K562 (cell line): ENCODE measurements at regions of chr2 and their contacts with region 1.

Region 1: GRCh38 chr2:70142590-70143313 is 48.1 kb downstream of the C2orf42 start:
- DNase-seq: peak; percentile 97 to 100 (median 98)
- ATAC-seq: peak; percentile 77
- H3K4me3 ChIP-seq: peak overlapping the region; percentile 28
- H3K27ac ChIP-seq: peak overlapping the region; percentile 97
- H3K4me1 ChIP-seq: peaks cover 54 to 59% of the 10 kb centered on the region in 2 experiments
- H3K27me3 ChIP-seq: no peaks in the 10 kb centered on the region
- CTCF ChIP-seq: peak; percentile 93 to 98 (median 95)
- EP300 ChIP-seq: peak; percentile 60
- POLR2A ChIP-seq: peak; percentile 85
- RAD21 ChIP-seq: peak; percentile 99 to 100

Region 2: DNA sequence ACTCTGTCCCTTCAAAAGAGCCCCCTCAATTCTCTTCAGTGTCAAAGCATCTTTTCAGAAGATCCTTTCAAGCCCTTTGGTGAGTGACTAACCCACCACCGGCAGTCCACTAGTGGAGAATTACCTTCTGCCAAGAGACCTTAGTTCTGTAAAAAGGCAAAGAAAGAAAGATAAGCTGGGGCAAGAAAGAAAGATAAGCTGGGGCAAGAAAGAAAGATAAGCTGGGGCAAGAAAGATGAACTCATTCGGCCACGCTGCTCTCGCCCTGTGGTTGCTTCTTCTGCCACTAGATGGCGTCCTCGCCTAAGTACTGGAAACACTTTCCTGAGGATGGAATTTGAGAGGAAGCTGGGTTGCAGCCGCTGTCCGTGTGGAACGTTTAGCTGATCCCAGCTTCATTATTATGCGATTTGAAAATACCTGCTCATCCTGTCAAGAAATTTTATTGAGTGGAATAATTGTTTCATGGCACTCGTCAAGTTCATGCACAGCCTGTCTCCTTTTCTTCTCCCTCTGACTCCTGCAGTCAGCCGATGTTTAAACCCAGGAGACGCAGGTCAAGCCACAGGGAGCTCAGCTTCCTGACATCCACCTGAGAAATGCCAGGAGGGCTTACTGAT is 418.1 kb before region 1 on chr2:
- CTCF ChIA-PET with region 1: no interaction called
- POLR2A ChIA-PET with region 1: interaction called, 5 read pairs
- in situ Hi-C with region 1: loop called (anchors 10 kb)
- intact Hi-C with region 1: loop called (anchors 2 kb)
- DNase-seq: peak; percentile 68 to 91 (median 73)
- ATAC-seq: peak; percentile 98
- H3K4me3 ChIP-seq: no peak overlapping the region
- H3K27ac ChIP-seq: no peak overlapping the region
- H3K4me1 ChIP-seq: peaks cover 6 to 7% of the 10 kb centered on the region in 2 experiments; a peak in 3 of 5 replicates
- H3K27me3 ChIP-seq: no peaks in the 10 kb centered on the region; a peak in 1 of 5 replicates
- CTCF ChIP-seq: peak; percentile 84 to 93 (median 93)
- EP300 ChIP-seq: peak; percentile 60
- POLR2A ChIP-seq: no peak
- RAD21 ChIP-seq: peak; percentile 97 to 99

Region 3: GRCh38 chr2:69933839-69934613 is 208.7 kb before region 1 on chr2:
- CTCF ChIA-PET with region 1: no interaction called
- POLR2A ChIA-PET with region 1: interaction called, 5 read pairs
- in situ Hi-C with region 1: loop called (anchors 5 kb)
- intact Hi-C with region 1: loop called (anchors 5 kb)
- DNase-seq: peak; percentile 35 to 75 (median 60)
- ATAC-seq: peak; percentile 87
- H3K4me3 ChIP-seq: no peak overlapping the region
- H3K27ac ChIP-seq: peak overlapping the region; percentile 71
- H3K4me1 ChIP-seq: peaks cover 4 to 26% of the 10 kb centered on the region in 2 experiments; a peak in 3 of 5 replicates
- H3K27me3 ChIP-seq: no peaks in the 10 kb centered on the region
- CTCF ChIP-seq: no peak
- EP300 ChIP-seq: peak; percentile 78
- POLR2A ChIP-seq: no peak
- RAD21 ChIP-seq: peak; percentile 27 to 29; a peak in 3 of 4 replicates

Region 4: DNA sequence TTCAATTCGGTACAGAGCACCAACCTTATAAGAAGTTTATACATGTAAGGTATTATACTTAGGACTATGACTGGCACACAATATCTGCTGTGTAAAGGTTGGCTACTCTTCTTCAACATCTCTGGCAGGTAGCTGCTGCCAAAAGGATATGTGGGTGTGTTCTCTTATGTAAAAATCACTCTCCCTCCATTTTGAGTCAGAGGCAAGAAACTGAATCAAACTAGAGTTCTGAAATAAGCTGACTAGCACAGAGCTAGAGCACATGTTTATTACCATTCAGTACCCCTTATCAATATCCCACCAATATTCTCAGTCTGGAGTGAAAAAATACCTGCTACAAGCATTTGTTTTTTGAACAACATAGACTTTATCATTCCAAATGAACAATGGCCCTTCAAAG is 93.5 kb before region 1 on chr2:
- CTCF ChIA-PET with region 1: no interaction called
- POLR2A ChIA-PET with region 1: no interaction called
- in situ Hi-C with region 1: no loop called
- intact Hi-C with region 1: no loop called
- DNase-seq: no peak
- ATAC-seq: no peak
- H3K4me3 ChIP-seq: no peak overlapping the region
- H3K27ac ChIP-seq: no peak overlapping the region
- H3K4me1 ChIP-seq: peaks cover 0 to 4% of the 10 kb centered on the region in 2 experiments; a peak in 3 of 5 replicates
- H3K27me3 ChIP-seq: no peaks in the 10 kb centered on the region
- CTCF ChIP-seq: no peak
- EP300 ChIP-seq: no peak
- POLR2A ChIP-seq: no peak
- RAD21 ChIP-seq: no peak

Region 5: DNA sequence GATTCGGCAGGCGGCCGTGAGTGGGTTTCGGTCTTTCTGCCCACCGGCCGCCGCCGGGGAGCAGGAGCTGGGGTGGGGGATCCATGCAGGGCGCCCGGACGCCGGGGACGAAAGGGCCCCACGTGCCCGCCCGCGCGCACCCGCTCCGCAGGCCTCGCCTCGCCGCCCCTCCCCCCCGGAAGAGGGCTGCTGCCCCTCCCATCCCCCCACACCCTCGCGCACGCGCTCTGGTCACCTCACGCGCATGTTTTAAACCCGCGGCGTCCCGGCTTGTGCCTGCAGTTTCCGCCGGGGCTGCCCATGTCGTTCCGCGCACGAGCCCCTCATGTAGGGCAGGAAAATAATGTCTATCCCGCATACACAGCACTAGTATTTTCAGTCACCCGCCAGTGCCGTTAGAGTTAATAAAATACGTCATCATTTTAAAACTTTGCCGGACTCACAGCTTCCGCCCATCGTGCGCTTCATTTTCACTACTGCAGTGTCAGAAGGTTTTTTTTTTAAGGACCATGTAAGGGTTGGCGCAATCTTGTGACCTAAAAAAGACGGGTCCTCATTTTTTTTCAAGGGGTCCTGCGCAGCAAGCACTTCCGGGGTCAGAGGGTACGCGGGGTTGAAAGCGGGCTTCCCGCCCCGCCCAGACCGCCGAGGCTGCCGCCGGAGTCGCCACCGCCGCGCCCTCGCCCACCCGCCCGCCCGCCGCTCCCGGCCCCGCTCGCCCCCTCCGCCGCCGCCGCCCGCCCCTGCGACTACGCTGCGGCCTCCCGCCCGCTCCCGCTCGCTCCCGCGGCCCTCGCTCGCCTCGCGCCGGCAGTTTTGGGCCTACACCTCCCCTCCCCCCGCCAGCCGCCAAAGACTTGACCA is 55.7 kb before region 1 on chr2 and contains the start of gene PCBP1:
- CTCF ChIA-PET with region 1: interaction called, 4 read pairs
- POLR2A ChIA-PET with region 1: interaction called, 15 read pairs
- in situ Hi-C with region 1: no loop called
- intact Hi-C with region 1: loop called (anchors 1 kb)
- DNase-seq: peak; percentile 94 to 97 (median 96)
- ATAC-seq: peak; percentile 34
- H3K4me3 ChIP-seq: peak within 1 kb of the TSS; percentile 90
- H3K27ac ChIP-seq: peak within 1 kb of the TSS; percentile 100
- H3K4me1 ChIP-seq: peaks cover 13 to 43% of the 10 kb centered on the region in 2 experiments
- H3K27me3 ChIP-seq: no peaks in the 10 kb centered on the region
- CTCF ChIP-seq: peak in 1 of 3 experiments; percentile 8; a peak in 1 of 6 replicates
- EP300 ChIP-seq: no peak; the same call in 1 of the 2 replicates
- POLR2A ChIP-seq: peak; percentile 80
- RAD21 ChIP-seq: peak in 1 of 2 experiments; percentile 9; a peak in 2 of 4 replicates
- polyA plus RNA-seq, gene PCBP1: 19.2 to 23.9 TPM

Region 6: GRCh38 chr2:70132244-70133126 is 10.3 kb before region 1 on chr2:
- CTCF ChIA-PET with region 1: no interaction called
- POLR2A ChIA-PET with region 1: interaction called, 15 read pairs
- in situ Hi-C with region 1: no loop called
- intact Hi-C with region 1: no loop called
- DNase-seq: peak in 1 of 4 experiments; percentile 64
- ATAC-seq: peak; percentile 47
- H3K4me3 ChIP-seq: peak overlapping the region; percentile 2; the same call in 1 of the 2 replicates
- H3K27ac ChIP-seq: peak overlapping the region; percentile 95
- H3K4me1 ChIP-seq: peaks cover 33 to 62% of the 10 kb centered on the region in 2 experiments
- H3K27me3 ChIP-seq: no peaks in the 10 kb centered on the region
- CTCF ChIP-seq: no peak
- EP300 ChIP-seq: no peak
- POLR2A ChIP-seq: peak; percentile 62
- RAD21 ChIP-seq: no peak

Region 7: DNA sequence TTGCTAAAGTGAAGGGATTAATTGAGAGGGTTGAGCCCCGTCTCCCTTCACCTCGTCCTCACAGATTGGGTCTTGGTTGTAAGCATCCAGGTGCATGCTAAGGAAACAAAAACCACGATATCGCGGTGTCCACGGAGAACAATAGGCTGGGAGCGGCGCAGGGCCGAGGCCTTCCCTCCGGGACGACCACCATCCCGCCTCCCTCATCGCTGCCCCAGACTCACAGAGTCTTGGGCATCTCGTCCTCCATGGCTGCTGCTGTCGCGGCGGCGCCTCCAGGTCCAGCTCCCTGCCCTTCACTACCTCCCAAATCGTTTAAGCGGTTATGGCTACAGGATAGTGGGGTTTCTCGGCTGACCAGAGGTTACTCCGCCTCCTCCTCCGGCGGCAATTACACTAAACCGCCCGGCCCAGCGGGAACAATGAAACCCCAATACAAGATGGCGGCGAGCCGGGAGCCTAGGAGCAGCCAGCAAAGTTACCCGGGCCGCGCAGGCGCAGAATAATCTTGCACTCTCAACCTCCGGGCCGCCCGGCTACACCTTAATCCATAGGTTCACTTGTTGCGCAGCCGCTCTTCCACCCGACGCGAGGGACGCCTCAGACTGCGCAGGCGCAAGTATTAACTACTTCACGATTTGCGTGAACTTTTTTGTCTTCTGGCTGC is 105.6 kb after region 1 on chr2 and contains the start of gene TIA1:
- CTCF ChIA-PET with region 1: no interaction called
- POLR2A ChIA-PET with region 1: interaction called, 6 read pairs
- in situ Hi-C with region 1: no loop called
- intact Hi-C with region 1: loop called (anchors 2 kb)
- DNase-seq: peak; percentile 97 to 99 (median 98)
- ATAC-seq: peak; percentile 90
- H3K4me3 ChIP-seq: peak within 1 kb of the TSS; percentile 78
- H3K27ac ChIP-seq: peak within 1 kb of the TSS; percentile 97
- H3K4me1 ChIP-seq: peaks cover 16 to 28% of the 10 kb centered on the region in 2 experiments; a peak in 4 of 5 replicates
- H3K27me3 ChIP-seq: no peaks in the 10 kb centered on the region
- CTCF ChIP-seq: no peak
- EP300 ChIP-seq: 0 out of 2 replicates have a peak, but pooled peaks have one; percentile 20
- POLR2A ChIP-seq: peak; percentile 97
- RAD21 ChIP-seq: no peak
- polyA plus RNA-seq, gene TIA1: 25.3 to 32.3 TPM